Heart left ventricle (tissue), 16 donors: ENCODE measurements at regions of chr3 and their contacts with region 1.

Region 1: GRCh38 chr3:113626503-113627371 is 69.7 kb downstream of the USF3 start:
- DNase-seq: peak; percentile 51 to 69 (median 58)
- ATAC-seq: peak; percentile 91 to 97 (median 94)
- H3K4me3 ChIP-seq: peak overlapping the region in 8 of 12 donors; percentile 6 to 44 (median 32)
- H3K27ac ChIP-seq: peak overlapping the region in 4 of 12 donors; percentile 1 to 54 (median 21)
- H3K4me1 ChIP-seq: peaks cover 0 to 18% (median 3%) of the 10 kb centered on the region in 12 donors
- H3K27me3 ChIP-seq: no peaks in the 10 kb centered on the region
- CTCF ChIP-seq: peak; percentile 77 to 92 (median 88)
- POLR2A ChIP-seq: no peak

Region 2: DNA sequence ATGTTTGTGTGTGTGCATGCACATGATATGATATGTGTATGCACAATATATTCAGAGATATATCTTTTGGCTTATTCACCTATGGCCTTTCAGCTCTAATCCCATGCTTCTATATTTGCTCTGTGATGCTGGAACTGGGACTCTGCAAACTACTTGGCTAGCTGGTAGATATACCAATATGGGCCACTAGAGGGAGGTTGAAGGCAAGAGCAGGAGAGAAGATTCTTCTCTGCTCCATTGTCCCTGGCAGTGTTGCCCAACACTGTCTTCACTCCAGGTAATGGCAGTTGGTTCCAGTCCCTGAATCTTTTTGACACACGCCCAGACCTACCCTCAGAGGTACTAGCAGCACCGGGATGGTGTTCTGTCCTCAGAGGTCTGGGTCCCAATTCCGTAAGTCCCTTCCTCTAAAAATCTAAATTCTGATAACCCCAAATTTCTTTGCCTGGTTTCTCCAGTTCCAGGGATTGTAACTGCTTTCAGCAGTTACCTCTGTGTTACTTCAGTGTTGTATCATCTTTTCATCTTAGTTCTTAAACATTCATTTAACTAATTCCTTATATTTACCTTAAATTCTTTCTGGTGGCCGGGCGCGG is 591.3 kb before region 1 on chr3:
- intact Hi-C with region 1: loop called in 1 of 10 experiments (anchors 10 kb)
- DNase-seq: peak in 2 of 5 donors; percentile 25 to 31
- ATAC-seq: peak in 3 of 4 donors; percentile 66 to 84 (median 78)
- H3K4me3 ChIP-seq: no peak overlapping the region
- H3K27ac ChIP-seq: no peak overlapping the region
- H3K4me1 ChIP-seq: no peaks in the 10 kb centered on the region
- H3K27me3 ChIP-seq: no peaks in the 10 kb centered on the region
- CTCF ChIP-seq: peak; percentile 60 to 80 (median 74)
- POLR2A ChIP-seq: no peak

Region 3: DNA sequence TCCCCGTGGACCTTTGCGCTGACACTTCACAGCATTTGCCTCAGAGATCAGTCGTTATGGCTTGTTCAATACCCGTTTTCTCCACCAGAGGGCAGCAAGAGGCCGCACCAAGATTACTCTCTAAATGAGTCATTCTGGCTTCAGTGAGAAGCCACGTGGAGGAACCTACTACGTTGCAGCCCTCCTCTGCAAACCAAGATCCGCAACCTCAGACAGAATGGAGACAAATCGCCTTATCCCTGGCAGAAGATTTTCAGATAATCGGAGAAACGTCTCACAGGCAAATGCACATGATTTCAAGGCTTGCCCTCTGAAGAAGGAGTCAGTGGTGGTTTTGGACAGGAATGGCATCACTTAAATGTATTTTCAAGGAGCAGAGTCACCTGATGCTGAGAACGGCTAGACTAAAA is 575.4 kb before region 1 on chr3:
- intact Hi-C with region 1: loop called in 1 of 10 experiments (anchors 5 kb)
- DNase-seq: peak; percentile 72 to 83 (median 74)
- ATAC-seq: peak; percentile 91 to 96 (median 95)
- H3K4me3 ChIP-seq: peak overlapping the region in 1 of 12 donors; percentile 27
- H3K27ac ChIP-seq: peak overlapping the region in 2 of 12 donors; percentile 31 to 71
- H3K4me1 ChIP-seq: peaks cover 0 to 31% (median 5%) of the 10 kb centered on the region in 12 donors
- H3K27me3 ChIP-seq: no peaks in the 10 kb centered on the region
- CTCF ChIP-seq: peak; percentile 87 to 98 (median 96)
- POLR2A ChIP-seq: no peak

Region 4: DNA sequence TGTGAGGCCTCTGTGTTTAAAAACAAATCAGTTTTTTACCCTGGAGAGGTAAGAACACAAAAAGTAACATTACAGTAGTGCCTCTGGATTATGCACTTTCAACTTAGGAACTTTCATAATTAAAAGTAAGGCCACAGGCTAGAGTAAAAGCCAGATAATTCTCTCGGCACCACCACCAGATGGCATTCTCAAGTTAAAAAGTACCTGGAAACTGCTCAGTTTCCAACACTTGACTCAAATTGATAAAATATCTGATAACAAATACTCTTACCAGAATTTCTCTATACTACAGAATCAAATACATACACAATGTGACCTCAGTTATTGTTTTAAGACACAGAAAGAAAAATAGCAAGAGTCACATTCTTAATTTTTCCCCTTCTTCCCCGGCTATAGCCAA is 131.7 kb before region 1 on chr3:
- intact Hi-C with region 1: loop called (anchors 1 to 5 kb)
- DNase-seq: no peak
- ATAC-seq: no peak
- H3K4me3 ChIP-seq: no peak overlapping the region
- H3K27ac ChIP-seq: no peak overlapping the region
- H3K4me1 ChIP-seq: no peaks in the 10 kb centered on the region
- H3K27me3 ChIP-seq: no peaks in the 10 kb centered on the region
- CTCF ChIP-seq: peak in 11 of 12 donors; percentile 10 to 56 (median 41)
- POLR2A ChIP-seq: no peak

Region 5: DNA sequence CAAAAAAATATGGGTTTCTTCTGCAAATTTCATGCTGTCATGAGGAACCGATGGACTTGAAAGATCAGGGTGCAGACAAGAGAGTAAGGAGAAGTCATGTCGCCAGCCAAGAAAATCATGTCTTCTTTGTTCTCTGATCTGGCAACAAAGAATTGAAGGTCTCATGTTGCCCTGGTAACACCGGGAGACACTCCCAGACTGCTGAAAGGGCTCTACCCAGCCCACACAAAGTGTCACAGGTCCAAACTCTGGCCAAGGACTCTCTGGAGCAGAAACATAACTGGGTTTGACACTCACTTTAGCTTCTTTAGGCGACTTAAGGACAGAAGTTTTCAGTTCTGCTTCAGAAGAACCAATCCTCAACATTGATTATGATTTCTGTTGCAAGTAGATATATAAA is 51.5 kb before region 1 on chr3:
- intact Hi-C with region 1: loop called in 2 of 10 experiments (anchors 2 to 10 kb)
- DNase-seq: no peak
- ATAC-seq: no peak
- H3K4me3 ChIP-seq: no peak overlapping the region
- H3K27ac ChIP-seq: no peak overlapping the region
- H3K4me1 ChIP-seq: peaks cover 0 to 4% (median 0%) of the 10 kb centered on the region in 12 donors
- H3K27me3 ChIP-seq: peaks cover 0 to 6% (median 0%) of the 10 kb centered on the region in 9 donors
- CTCF ChIP-seq: no peak
- POLR2A ChIP-seq: no peak

Region 6: GRCh38 chr3:113754494-113755159 is 127.9 kb after region 1 on chr3:
- intact Hi-C with region 1: no loop called
- DNase-seq: no peak
- ATAC-seq: no peak
- H3K4me3 ChIP-seq: no peak overlapping the region
- H3K27ac ChIP-seq: peak overlapping the region in 1 of 12 donors; percentile 1
- H3K4me1 ChIP-seq: peaks cover 0 to 25% (median 3%) of the 10 kb centered on the region in 12 donors
- H3K27me3 ChIP-seq: no peaks in the 10 kb centered on the region
- CTCF ChIP-seq: no peak
- POLR2A ChIP-seq: no peak